Left colon (tissue), 2 donors: ENCODE measurements at regions of chr1 and their contacts with region 1.

Region 1: GRCh38 chr1:74780594-74780993 is 47.6 kb downstream of the TYW3 start:
- DNase-seq: no peak
- ATAC-seq: no peak

Region 2: DNA sequence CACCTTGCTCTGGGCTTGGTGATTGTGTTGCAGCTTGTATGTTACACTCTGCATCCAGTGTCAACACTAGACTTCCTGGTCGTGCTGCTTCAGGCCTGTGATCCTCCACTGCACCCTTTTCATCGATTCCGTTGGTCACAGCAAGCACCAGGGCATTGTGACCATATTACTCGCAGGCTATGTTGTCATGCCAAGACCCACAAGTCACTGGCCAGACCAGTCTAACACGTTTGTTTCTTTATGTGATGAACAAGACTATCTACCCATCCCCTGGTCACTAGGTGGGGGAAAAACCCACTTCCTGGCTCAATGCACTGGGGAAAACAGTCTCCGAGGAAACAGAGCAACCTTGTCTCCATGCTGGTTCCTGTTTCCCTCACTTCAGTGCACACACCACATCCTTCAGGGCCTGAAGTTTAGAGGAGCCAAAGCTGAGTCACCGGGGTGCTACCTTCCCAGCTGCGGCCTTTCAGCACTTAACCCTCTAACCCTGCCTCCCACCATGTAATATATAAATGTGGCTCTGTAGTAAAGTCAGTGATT is 127.9 kb before region 1 on chr1:
- intact Hi-C with region 1: no loop called
- DNase-seq: no peak
- ATAC-seq: no peak

Region 3: GRCh38 chr1:74895411-74895810 is 114.8 kb after region 1 on chr1:
- intact Hi-C with region 1: no loop called
- DNase-seq: no peak
- ATAC-seq: no peak

Region 4: DNA sequence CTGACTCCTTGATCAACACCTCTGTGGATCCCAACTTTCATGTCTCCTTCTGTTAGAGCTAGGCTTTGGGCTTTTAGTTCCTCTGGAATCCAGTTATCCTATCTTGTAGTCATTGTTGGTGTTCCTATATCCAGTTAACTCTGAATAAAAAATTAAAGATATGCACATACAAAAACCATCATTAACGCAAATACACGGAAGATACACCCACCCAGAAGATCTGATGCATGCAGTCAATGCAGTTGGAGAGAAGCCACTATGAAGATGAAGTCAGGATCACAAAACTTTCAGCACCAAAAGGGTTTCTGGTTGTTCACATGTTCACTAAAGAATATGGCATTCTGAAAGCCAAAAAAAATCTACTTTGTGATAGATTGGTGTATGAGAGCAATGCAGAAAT is 230.0 kb after region 1 on chr1:
- intact Hi-C with region 1: no loop called
- DNase-seq: no peak
- ATAC-seq: no peak

Region 5: GRCh38 chr1:75625795-75626194 is 845.2 kb after region 1 on chr1:
- intact Hi-C with region 1: loop called in 1 of 2 experiments (anchors 10 kb)
- DNase-seq: no peak
- ATAC-seq: no peak